CD4-positive, alpha-beta memory T cell (primary cell): ENCODE measurements at regions of chr11 and their contacts with region 1.

Region 1: DNA sequence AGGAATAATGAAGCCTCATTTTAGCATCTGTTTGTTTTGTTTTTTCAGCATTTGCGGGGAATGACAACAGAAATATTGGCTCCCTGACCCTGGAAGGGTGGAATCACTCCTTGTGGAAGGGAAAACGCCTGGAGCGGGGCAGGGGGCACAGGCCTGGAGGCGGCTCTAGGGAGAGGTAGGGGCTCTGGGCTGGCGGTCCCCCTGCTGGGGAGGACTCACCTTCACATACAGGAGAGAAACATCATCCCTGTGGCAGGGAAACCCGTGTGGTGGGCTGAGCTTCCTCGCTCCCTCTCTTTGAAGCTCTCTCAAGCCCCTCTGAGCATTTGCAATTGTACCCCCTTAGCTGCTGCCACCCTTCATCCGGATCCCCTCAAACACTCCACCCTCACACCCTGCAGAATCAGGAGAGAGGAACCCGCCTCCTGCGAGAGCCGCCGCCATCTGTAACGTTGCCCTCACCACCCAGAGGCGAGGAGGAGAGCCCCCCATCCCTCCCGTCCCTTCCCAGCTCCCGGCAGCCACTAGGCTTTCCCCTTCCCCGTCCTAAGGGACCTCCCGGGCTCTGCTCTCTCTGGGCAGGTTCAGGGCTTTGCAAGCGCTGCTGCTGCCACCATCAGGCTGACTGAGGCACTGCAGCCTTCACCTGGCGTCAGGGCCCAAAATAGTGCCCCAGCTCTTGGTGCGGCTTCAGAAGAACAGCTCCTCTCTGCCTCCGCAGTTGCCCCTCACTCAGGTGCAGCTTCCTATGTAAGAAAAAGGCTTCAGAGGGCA is 10.4 kb downstream of the KIRREL3 start:
- DNase-seq: peak in 4 of 5 donors; percentile 15 to 30 (median 18)
- H3K4me3 ChIP-seq: no peak overlapping the region
- H3K4me3 Mint-ChIP-seq: no peak overlapping the region
- H3K27ac ChIP-seq: no peak overlapping the region
- H3K27ac Mint-ChIP-seq: no peak overlapping the region
- H3K4me1 ChIP-seq: no peaks in the 10 kb centered on the region
- H3K4me1 Mint-ChIP-seq: no peaks in the 10 kb centered on the region
- H3K27me3 ChIP-seq: no peaks in the 10 kb centered on the region
- H3K27me3 Mint-ChIP-seq: peaks cover 1 to 6% of the 10 kb centered on the region in 2 donors

Region 2: DNA sequence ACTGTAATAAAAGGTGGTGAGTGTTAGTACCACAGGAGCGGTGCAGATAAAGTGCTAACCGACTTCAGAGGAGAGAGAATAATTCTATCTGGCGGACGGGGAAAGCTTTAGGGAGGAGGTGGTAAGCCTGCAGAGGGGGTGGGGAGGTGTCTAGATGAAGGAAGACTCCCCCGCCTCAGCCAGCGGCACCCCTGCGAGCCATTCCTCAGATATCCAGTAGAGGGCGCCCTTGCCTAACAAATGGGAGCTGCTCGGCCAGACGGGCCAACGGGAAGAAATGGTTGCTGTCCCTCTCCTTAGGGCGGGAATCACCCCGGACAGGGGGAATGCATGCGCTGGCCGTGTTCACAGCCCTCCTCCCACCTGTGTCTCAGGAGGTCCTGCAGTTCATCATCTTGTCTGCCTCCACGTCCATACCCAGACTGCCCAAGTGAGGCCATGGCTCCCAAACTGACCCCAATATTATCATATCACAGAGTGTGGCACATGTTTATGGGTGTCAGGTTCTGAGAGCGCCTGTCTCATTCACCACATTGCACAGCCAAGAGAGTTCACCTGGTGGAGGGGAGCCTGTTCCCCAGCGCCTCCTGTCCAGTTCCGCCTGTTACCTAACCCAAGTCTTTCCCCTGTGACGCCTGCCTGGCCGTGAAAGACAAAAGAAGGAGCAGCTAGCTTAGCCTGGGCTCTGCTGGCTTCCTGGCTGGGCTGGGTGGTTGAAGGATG is 549.2 kb before region 1 on chr11:
- CTCF ChIA-PET with region 1: interaction called, 28 read pairs
- POLR2A ChIA-PET with region 1: no interaction called
- intact Hi-C with region 1: no loop called
- DNase-seq: peak; percentile 56 to 74 (median 61)
- H3K4me3 ChIP-seq: no peak overlapping the region
- H3K4me3 Mint-ChIP-seq: no peak overlapping the region
- H3K27ac ChIP-seq: no peak overlapping the region
- H3K27ac Mint-ChIP-seq: no peak overlapping the region
- H3K4me1 ChIP-seq: peaks cover 3% of the 10 kb centered on the region
- H3K4me1 Mint-ChIP-seq: peaks cover 0 to 5% (median under 1%) of the 10 kb centered on the region in 4 donors
- H3K27me3 ChIP-seq: no peaks in the 10 kb centered on the region
- H3K27me3 Mint-ChIP-seq: peaks cover 3 to 8% of the 10 kb centered on the region in 2 donors

Region 3: DNA sequence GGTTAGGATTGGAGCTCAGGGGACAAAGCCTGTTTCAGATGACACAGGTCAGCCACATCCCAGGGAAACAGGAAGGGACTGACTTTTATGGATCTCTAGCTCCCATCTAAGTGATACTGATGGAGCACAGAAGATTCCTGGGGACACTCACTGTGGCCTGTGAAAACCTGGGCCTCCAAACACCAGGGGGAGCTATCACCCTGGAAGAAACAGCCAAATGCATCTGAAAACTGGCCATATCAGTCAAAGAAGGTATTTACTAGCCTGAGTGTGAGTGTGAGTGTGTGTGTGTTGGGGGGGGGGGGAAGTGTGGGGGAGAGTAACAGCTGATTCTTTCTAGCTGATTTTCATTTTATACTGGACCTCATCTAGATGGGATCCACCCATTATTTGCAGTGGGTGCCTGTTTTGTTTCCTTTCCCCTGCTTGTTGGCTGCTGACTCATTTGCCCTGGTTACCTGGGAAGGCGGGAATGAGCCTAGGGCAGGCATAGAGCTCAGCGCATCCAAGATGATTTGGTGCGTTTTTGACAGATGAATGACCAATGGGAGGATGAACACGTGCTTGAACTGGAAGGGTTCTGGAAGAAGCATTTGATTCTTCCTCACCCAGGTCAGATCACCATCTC is 273.6 kb before region 1 on chr11:
- CTCF ChIA-PET with region 1: interaction called, 16 read pairs
- POLR2A ChIA-PET with region 1: no interaction called
- intact Hi-C with region 1: no loop called
- DNase-seq: peak in 3 of 5 donors; percentile 2 to 39 (median 7)
- H3K4me3 ChIP-seq: no peak overlapping the region
- H3K4me3 Mint-ChIP-seq: no peak overlapping the region
- H3K27ac ChIP-seq: no peak overlapping the region
- H3K27ac Mint-ChIP-seq: no peak overlapping the region
- H3K4me1 ChIP-seq: no peaks in the 10 kb centered on the region
- H3K4me1 Mint-ChIP-seq: no peaks in the 10 kb centered on the region
- H3K27me3 ChIP-seq: no peaks in the 10 kb centered on the region
- H3K27me3 Mint-ChIP-seq: peaks cover 9 to 23% of the 10 kb centered on the region in 2 donors

Region 4: GRCh38 chr11:127114035-127114434 is 123.9 kb after region 1 on chr11:
- CTCF ChIA-PET with region 1: no interaction called
- POLR2A ChIA-PET with region 1: no interaction called
- intact Hi-C with region 1: no loop called
- DNase-seq: no peak
- H3K4me3 ChIP-seq: no peak overlapping the region
- H3K4me3 Mint-ChIP-seq: no peak overlapping the region
- H3K27ac ChIP-seq: no peak overlapping the region
- H3K27ac Mint-ChIP-seq: no peak overlapping the region
- H3K4me1 ChIP-seq: no peaks in the 10 kb centered on the region
- H3K4me1 Mint-ChIP-seq: no peaks in the 10 kb centered on the region
- H3K27me3 ChIP-seq: no peaks in the 10 kb centered on the region
- H3K27me3 Mint-ChIP-seq: peaks cover 0 to 2% of the 10 kb centered on the region in 2 donors